Psoas muscle (tissue), 8 donors: ENCODE measurements at regions of chr9 and their contacts with region 1.

Region 1: DNA sequence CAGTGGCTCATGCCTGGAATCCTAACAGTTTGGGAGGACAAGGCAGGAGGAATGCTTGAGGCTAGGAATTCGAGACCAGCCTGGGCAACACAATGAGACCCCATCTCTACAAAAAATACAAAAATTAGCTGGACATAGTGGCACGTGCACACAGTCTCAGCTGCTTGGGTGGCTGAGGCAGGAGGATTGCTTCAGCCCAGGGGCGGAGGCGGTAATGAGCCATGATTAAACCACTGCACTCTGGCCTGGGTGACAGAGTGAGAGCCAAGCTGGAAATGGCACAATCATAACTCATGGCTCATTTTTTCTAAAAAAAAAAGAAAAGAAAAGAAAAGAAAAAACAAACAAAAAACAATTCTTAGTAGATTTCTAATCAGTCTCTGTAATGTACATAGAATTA is 446.2 kb downstream of the ELAVL2 start:
- DNase-seq: no peak
- ATAC-seq: no peak
- H3K4me3 ChIP-seq: no peak overlapping the region
- H3K27ac ChIP-seq: no peak overlapping the region
- H3K4me1 ChIP-seq: no peaks in the 10 kb centered on the region
- H3K27me3 ChIP-seq: peaks cover 0 to 2% (median 0%) of the 10 kb centered on the region in 3 donors
- CTCF ChIP-seq: no peak

Region 2: DNA sequence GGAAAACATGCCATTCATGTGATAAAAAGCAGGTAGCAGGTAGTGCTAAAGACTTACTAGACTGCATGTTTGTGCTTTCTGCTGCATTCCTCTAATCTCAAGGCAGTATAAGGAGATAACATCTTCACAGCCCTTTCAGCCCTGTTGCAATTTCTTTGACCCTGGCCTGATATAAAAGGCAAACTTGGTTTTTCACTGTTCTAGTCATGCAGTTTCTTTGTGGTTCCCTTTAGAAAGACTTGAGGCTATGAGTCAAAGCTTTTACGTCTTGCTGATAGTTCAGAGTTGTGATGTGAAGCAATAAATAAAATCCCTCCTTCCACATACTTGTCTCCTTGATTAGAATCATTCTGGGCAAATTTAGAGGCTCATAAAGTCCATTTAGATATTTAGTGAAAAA is 1282.1 kb before region 1 on chr9:
- intact Hi-C with region 1: no loop called
- DNase-seq: no peak
- ATAC-seq: peak in 1 of 4 donors; percentile 14
- H3K4me3 ChIP-seq: no peak overlapping the region
- H3K27ac ChIP-seq: no peak overlapping the region
- H3K4me1 ChIP-seq: peaks cover 7% of the 10 kb centered on the region
- H3K27me3 ChIP-seq: no peaks in the 10 kb centered on the region
- CTCF ChIP-seq: no peak

Region 3: GRCh38 chr9:23361096-23361495 is 18.7 kb before region 1 on chr9:
- intact Hi-C with region 1: loop called (anchors 1 to 2 kb)
- DNase-seq: no peak
- ATAC-seq: no peak
- H3K4me3 ChIP-seq: no peak overlapping the region
- H3K27ac ChIP-seq: no peak overlapping the region
- H3K4me1 ChIP-seq: no peaks in the 10 kb centered on the region
- H3K27me3 ChIP-seq: no peaks in the 10 kb centered on the region
- CTCF ChIP-seq: no peak

Region 4: GRCh38 chr9:23438299-23438907 is 58.6 kb after region 1 on chr9:
- intact Hi-C with region 1: loop called (anchors 10 kb)
- DNase-seq: no peak
- ATAC-seq: no peak
- H3K4me3 ChIP-seq: no peak overlapping the region
- H3K27ac ChIP-seq: no peak overlapping the region
- H3K4me1 ChIP-seq: no peaks in the 10 kb centered on the region
- H3K27me3 ChIP-seq: no peaks in the 10 kb centered on the region
- CTCF ChIP-seq: no peak

Region 5: GRCh38 chr9:23447166-23447565 is 67.3 kb after region 1 on chr9:
- intact Hi-C with region 1: loop called in 1 of 2 experiments (anchors 10 kb)
- DNase-seq: no peak
- ATAC-seq: no peak
- H3K4me3 ChIP-seq: no peak overlapping the region
- H3K27ac ChIP-seq: no peak overlapping the region
- H3K4me1 ChIP-seq: no peaks in the 10 kb centered on the region
- H3K27me3 ChIP-seq: no peaks in the 10 kb centered on the region
- CTCF ChIP-seq: no peak